B cell (primary cell): ENCODE measurements at regions of chr1 and their contacts with region 1.

Region 1: GRCh38 chr1:107430540-107431228 is 289.8 kb downstream of the NTNG1 start:
- DNase-seq: peak; percentile 71
- ATAC-seq: peak; percentile 56
- H3K4me3 ChIP-seq: no peak overlapping the region
- H3K4me3 Mint-ChIP-seq: peak overlapping the region; percentile 17
- H3K27ac ChIP-seq: no peak overlapping the region
- H3K27ac Mint-ChIP-seq: no peak overlapping the region
- H3K4me1 ChIP-seq: peaks cover 24 to 26% of the 10 kb centered on the region in 2 donors
- H3K4me1 Mint-ChIP-seq: peaks cover 22% of the 10 kb centered on the region
- H3K27me3 ChIP-seq: no peaks in the 10 kb centered on the region
- H3K27me3 Mint-ChIP-seq: no peaks in the 10 kb centered on the region
- CTCF ChIP-seq: peak; percentile 86

Region 2: DNA sequence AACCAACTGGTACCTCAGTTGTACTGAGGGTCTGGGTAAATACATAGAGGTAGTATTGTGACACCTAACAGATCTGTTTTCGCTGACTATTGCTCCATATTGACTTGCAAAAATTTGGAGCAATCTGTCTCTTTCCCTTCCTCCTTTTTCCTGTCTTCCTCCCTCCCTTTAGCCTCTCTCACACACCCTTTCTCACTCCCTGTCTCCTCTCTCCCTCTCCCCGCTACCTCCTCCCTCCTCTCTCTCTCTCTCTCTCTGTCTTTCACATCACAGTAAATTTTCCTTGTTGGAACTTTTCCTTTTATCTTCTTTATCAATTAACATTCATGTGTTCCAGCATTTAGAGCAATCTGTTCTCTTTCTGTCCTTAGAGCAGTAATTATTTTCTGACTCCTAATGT is 11.7 kb before region 1 on chr1:
- CTCF ChIA-PET with region 1: interaction called, 10 read pairs
- POLR2A ChIA-PET with region 1: no interaction called
- intact Hi-C with region 1: no loop called
- DNase-seq: no peak
- ATAC-seq: no peak
- H3K4me3 ChIP-seq: no peak overlapping the region
- H3K4me3 Mint-ChIP-seq: no peak overlapping the region
- H3K27ac ChIP-seq: no peak overlapping the region
- H3K27ac Mint-ChIP-seq: no peak overlapping the region
- H3K4me1 ChIP-seq: no peaks in the 10 kb centered on the region
- H3K4me1 Mint-ChIP-seq: no peaks in the 10 kb centered on the region
- H3K27me3 ChIP-seq: no peaks in the 10 kb centered on the region
- H3K27me3 Mint-ChIP-seq: no peaks in the 10 kb centered on the region
- CTCF ChIP-seq: no peak

Region 3: GRCh38 chr1:107450899-107451664 is 20.4 kb after region 1 on chr1:
- CTCF ChIA-PET with region 1: interaction called, 46 read pairs
- POLR2A ChIA-PET with region 1: no interaction called
- intact Hi-C with region 1: loop called (anchors 1 kb)
- DNase-seq: peak; percentile 80
- ATAC-seq: peak; percentile 73
- H3K4me3 ChIP-seq: peak overlapping the region; percentile 12 to 62 (median 35)
- H3K4me3 Mint-ChIP-seq: peak overlapping the region; percentile 84
- H3K27ac ChIP-seq: peak overlapping the region; percentile 91 to 97
- H3K27ac Mint-ChIP-seq: peak overlapping the region; percentile 90
- H3K4me1 ChIP-seq: peaks cover 65 to 73% of the 10 kb centered on the region in 2 donors
- H3K4me1 Mint-ChIP-seq: peaks cover 80% of the 10 kb centered on the region
- H3K27me3 ChIP-seq: no peaks in the 10 kb centered on the region
- H3K27me3 Mint-ChIP-seq: no peaks in the 10 kb centered on the region
- CTCF ChIP-seq: no peak

Region 4: GRCh38 chr1:107473065-107473464 is 42.4 kb after region 1 on chr1:
- CTCF ChIA-PET with region 1: interaction called, 63 read pairs
- POLR2A ChIA-PET with region 1: no interaction called
- intact Hi-C with region 1: no loop called
- DNase-seq: no peak
- ATAC-seq: no peak
- H3K4me3 ChIP-seq: no peak overlapping the region
- H3K4me3 Mint-ChIP-seq: no peak overlapping the region
- H3K27ac ChIP-seq: no peak overlapping the region
- H3K27ac Mint-ChIP-seq: no peak overlapping the region
- H3K4me1 ChIP-seq: peaks cover 0 to 6% of the 10 kb centered on the region in 2 donors
- H3K4me1 Mint-ChIP-seq: peaks cover 9% of the 10 kb centered on the region
- H3K27me3 ChIP-seq: no peaks in the 10 kb centered on the region
- H3K27me3 Mint-ChIP-seq: no peaks in the 10 kb centered on the region
- CTCF ChIP-seq: no peak

Region 5: DNA sequence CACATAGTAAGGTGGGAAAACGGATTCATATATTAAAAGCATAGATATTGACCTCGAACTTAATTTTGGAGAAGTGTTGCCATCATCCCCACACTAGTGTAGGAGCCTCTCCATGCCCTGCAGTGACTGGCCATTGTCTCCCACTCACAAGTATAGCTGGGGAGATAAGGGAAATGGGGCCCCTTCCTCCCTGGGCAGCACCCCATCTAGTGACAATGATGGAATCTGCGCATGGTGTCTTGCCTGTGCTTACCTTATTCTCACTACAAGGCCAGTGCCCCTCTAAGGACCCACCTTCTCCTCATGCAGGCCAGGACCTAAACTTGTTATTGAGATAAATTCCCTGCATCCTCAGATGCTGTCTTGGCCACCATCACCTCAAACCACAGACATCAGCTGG is 85.0 kb after region 1 on chr1:
- CTCF ChIA-PET with region 1: interaction called, 13 read pairs
- POLR2A ChIA-PET with region 1: no interaction called
- intact Hi-C with region 1: no loop called
- DNase-seq: no peak
- ATAC-seq: no peak
- H3K4me3 ChIP-seq: no peak overlapping the region
- H3K4me3 Mint-ChIP-seq: no peak overlapping the region
- H3K27ac ChIP-seq: no peak overlapping the region
- H3K27ac Mint-ChIP-seq: no peak overlapping the region
- H3K4me1 ChIP-seq: no peaks in the 10 kb centered on the region
- H3K4me1 Mint-ChIP-seq: peaks cover 3% of the 10 kb centered on the region
- H3K27me3 ChIP-seq: no peaks in the 10 kb centered on the region
- H3K27me3 Mint-ChIP-seq: no peaks in the 10 kb centered on the region
- CTCF ChIP-seq: no peak

Region 6: DNA sequence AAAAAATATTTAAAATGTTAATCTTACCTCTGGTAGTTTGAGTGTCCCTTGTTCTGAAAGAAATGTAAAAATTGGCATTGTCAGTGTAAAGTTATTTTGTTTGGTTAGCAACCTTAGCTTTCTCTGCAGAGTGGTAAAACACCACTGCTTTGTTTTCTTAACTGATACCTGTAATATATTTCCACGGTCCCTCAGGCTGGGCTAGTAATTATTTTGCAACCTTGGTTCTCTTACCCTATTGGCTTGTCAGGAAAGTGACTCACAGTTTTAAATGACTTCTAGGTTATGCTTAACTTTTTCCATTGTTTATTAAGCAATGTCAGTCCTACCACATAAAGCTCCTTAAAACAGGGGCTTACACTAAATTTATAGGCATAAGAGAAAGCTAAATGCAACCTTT is 257.7 kb after region 1 on chr1:
- CTCF ChIA-PET with region 1: no interaction called
- POLR2A ChIA-PET with region 1: no interaction called
- intact Hi-C with region 1: no loop called
- DNase-seq: no peak
- ATAC-seq: no peak
- H3K4me3 ChIP-seq: no peak overlapping the region
- H3K4me3 Mint-ChIP-seq: no peak overlapping the region
- H3K27ac ChIP-seq: no peak overlapping the region
- H3K27ac Mint-ChIP-seq: no peak overlapping the region
- H3K4me1 ChIP-seq: no peaks in the 10 kb centered on the region
- H3K4me1 Mint-ChIP-seq: no peaks in the 10 kb centered on the region
- H3K27me3 ChIP-seq: no peaks in the 10 kb centered on the region
- H3K27me3 Mint-ChIP-seq: no peaks in the 10 kb centered on the region
- CTCF ChIP-seq: no peak

Region 7: GRCh38 chr1:108152782-108153222 is 722.1 kb after region 1 on chr1:
- CTCF ChIA-PET with region 1: no interaction called
- POLR2A ChIA-PET with region 1: no interaction called
- intact Hi-C with region 1: no loop called
- DNase-seq: no peak
- ATAC-seq: no peak
- H3K4me3 ChIP-seq: no peak overlapping the region
- H3K4me3 Mint-ChIP-seq: no peak overlapping the region
- H3K27ac ChIP-seq: no peak overlapping the region
- H3K27ac Mint-ChIP-seq: no peak overlapping the region
- H3K4me1 ChIP-seq: no peaks in the 10 kb centered on the region
- H3K4me1 Mint-ChIP-seq: no peaks in the 10 kb centered on the region
- H3K27me3 ChIP-seq: no peaks in the 10 kb centered on the region
- H3K27me3 Mint-ChIP-seq: no peaks in the 10 kb centered on the region
- CTCF ChIP-seq: no peak